PC-3 (cell line): ENCODE measurements at regions of chr17 and their contacts with region 1.

Region 1: GRCh38 chr17:7035591-7036368 is at the start of gene SLC16A13:
- DNase-seq: peak; percentile 91
- ATAC-seq: peak; percentile 96
- H3K4me3 ChIP-seq: peak within 1 kb of the TSS; percentile 84
- H3K27ac ChIP-seq: peak within 1 kb of the TSS; percentile 42
- H3K4me1 ChIP-seq: peaks cover 12% of the 10 kb centered on the region
- H3K27me3 ChIP-seq: no peaks in the 10 kb centered on the region
- CTCF ChIP-seq: no peak
- total RNA-seq, gene SLC16A13: 0.62 and 1.7 TPM in 2 replicates

Region 2: DNA sequence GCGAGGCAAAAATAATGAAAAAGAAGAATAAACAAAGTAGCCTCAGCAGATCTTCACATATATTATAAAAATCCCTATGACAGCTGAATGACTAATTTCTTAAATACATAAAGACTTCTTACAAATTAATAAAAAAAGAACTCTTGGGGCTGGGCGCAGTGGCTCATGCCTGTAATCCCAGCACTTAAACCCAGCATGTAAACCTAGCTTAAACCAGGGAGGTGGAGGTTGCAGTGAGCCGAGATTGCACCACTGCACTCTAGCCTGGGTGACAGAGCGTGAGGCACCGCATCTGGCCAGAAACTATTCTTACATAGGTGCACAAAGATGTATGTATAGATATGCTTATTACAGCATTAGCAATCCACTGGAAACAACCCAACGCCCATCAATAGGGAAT is 356.5 kb before region 1 on chr17:
- CTCF ChIA-PET with region 1: no interaction called
- POLR2A ChIA-PET with region 1: interaction called, 13 read pairs
- intact Hi-C with region 1: no loop called
- DNase-seq: peak; percentile 68
- ATAC-seq: peak; percentile 92
- H3K4me3 ChIP-seq: peak overlapping the region; percentile 32; the same call in 1 of the 2 replicates
- H3K27ac ChIP-seq: peak overlapping the region; percentile 70
- H3K4me1 ChIP-seq: peaks cover 19% of the 10 kb centered on the region
- H3K27me3 ChIP-seq: no peaks in the 10 kb centered on the region
- CTCF ChIP-seq: no peak

Region 3: GRCh38 chr17:7156342-7156940 is 120.7 kb after region 1 on chr17:
- CTCF ChIA-PET with region 1: interaction called, 11 read pairs
- POLR2A ChIA-PET with region 1: no interaction called
- intact Hi-C with region 1: no loop called
- DNase-seq: no peak
- ATAC-seq: no peak
- H3K4me3 ChIP-seq: no peak overlapping the region
- H3K27ac ChIP-seq: no peak overlapping the region
- H3K4me1 ChIP-seq: no peaks in the 10 kb centered on the region
- H3K27me3 ChIP-seq: no peaks in the 10 kb centered on the region
- CTCF ChIP-seq: no peak